ENCODE measurements at regions of chr3 and their contacts with region 1.

Region 1: GRCh38 chr3:44198284-44199269 is 43.1 kb upstream of the TOPAZ1 start:
- DNase-seq: peak; percentile 41 to 60 (median 57)
- H3K4me3 ChIP-seq: no peak overlapping the region
- H3K27ac ChIP-seq: no peak overlapping the region
- H3K4me1 ChIP-seq: no peaks in the 10 kb centered on the region
- H3K27me3 ChIP-seq: no peaks in the 10 kb centered on the region
- CTCF ChIP-seq: peak; percentile 26 to 57 (median 34)
- EP300 ChIP-seq: no peak
- POLR2A ChIP-seq: no peak

Region 2: GRCh38 chr3:43540624-43541023 is 658.0 kb before region 1 on chr3:
- intact Hi-C with region 1: loop called in 3 of 4 experiments (anchors 5 to 10 kb)
- DNase-seq: no peak
- H3K4me3 ChIP-seq: no peak overlapping the region
- H3K27ac ChIP-seq: no peak overlapping the region
- H3K4me1 ChIP-seq: no peaks in the 10 kb centered on the region
- H3K27me3 ChIP-seq: no peaks in the 10 kb centered on the region
- CTCF ChIP-seq: no peak
- EP300 ChIP-seq: no peak
- POLR2A ChIP-seq: no peak

Region 3: GRCh38 chr3:43855674-43856299 is 342.8 kb before region 1 on chr3:
- intact Hi-C with region 1: loop called in 1 of 4 experiments (anchors 10 kb)
- DNase-seq: peak; percentile 28 to 47 (median 46)
- H3K4me3 ChIP-seq: no peak overlapping the region
- H3K27ac ChIP-seq: no peak overlapping the region
- H3K4me1 ChIP-seq: no peaks in the 10 kb centered on the region
- H3K27me3 ChIP-seq: no peaks in the 10 kb centered on the region
- CTCF ChIP-seq: peak in 2 of 3 donors; percentile 18 to 34
- EP300 ChIP-seq: no peak
- POLR2A ChIP-seq: no peak

Measured in ovary (tissue), 10 donors.